Spleen (tissue), 13 donors: ENCODE measurements at regions of chr9 and their contacts with region 1.

Region 1: DNA sequence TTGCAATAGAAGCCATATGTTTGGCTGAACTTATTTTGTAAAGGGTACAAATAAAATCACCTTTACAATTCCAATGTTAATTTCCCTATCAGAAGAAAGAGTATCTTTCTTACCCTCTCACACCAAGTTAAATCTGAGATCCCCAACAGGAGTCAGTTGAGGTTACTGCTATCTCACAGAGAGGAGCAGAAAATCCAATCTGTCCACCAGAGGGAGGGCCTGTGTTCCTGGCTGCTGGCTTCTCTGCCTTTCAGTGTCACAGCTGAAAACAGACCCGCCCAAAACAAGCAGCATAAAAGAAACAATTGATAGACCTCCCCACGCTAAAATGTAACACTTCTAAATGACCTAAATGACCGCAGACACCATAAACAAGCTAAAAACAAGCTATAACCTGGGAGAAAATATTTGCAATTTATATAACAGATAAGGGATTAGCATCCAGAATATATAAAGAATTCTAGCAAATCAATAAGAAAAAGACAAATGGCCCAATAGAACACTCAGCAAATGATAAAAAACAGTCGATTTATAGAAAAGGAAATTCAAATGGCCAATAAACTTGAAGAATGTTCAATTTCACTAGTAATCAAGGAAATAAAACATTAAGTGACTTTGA is 24.5 kb upstream of the MVB12B start:
- DNase-seq: no peak
- H3K4me3 ChIP-seq: no peak overlapping the region
- H3K27ac ChIP-seq: no peak overlapping the region
- H3K4me1 ChIP-seq: peaks cover 0 to 10% (median 0%) of the 10 kb centered on the region in 6 donors
- H3K27me3 ChIP-seq: peaks cover 0 to 10% (median 0%) of the 10 kb centered on the region in 7 donors
- CTCF ChIP-seq: peak; percentile 39 to 77 (median 69)
- POLR2A ChIP-seq: no peak

Region 2: GRCh38 chr9:125538092-125538473 is 764.0 kb before region 1 on chr9:
- intact Hi-C with region 1: no loop called
- DNase-seq: no peak
- H3K4me3 ChIP-seq: no peak overlapping the region
- H3K27ac ChIP-seq: no peak overlapping the region
- H3K4me1 ChIP-seq: peaks cover 0 to 31% (median 3%) of the 10 kb centered on the region in 6 donors
- H3K27me3 ChIP-seq: no peaks in the 10 kb centered on the region
- CTCF ChIP-seq: no peak
- POLR2A ChIP-seq: no peak

Region 3: GRCh38 chr9:126228781-126229444 is 73.2 kb before region 1 on chr9:
- intact Hi-C with region 1: no loop called
- DNase-seq: peak; percentile 91
- H3K4me3 ChIP-seq: no peak overlapping the region
- H3K27ac ChIP-seq: no peak overlapping the region
- H3K4me1 ChIP-seq: peaks cover 0 to 7% (median 4%) of the 10 kb centered on the region in 6 donors
- H3K27me3 ChIP-seq: peaks cover 0 to 54% (median 0%) of the 10 kb centered on the region in 7 donors
- CTCF ChIP-seq: peak; percentile 84 to 97 (median 91)
- POLR2A ChIP-seq: no peak

Region 4: GRCh38 chr9:126490871-126491567 is 188.9 kb after region 1 on chr9:
- intact Hi-C with region 1: loop called (anchors 5 kb)
- DNase-seq: peak; percentile 61
- H3K4me3 ChIP-seq: no peak overlapping the region
- H3K27ac ChIP-seq: no peak overlapping the region
- H3K4me1 ChIP-seq: peaks cover 0 to 43% (median 32%) of the 10 kb centered on the region in 6 donors
- H3K27me3 ChIP-seq: peaks cover 0 to 7% (median 0%) of the 10 kb centered on the region in 7 donors
- CTCF ChIP-seq: peak; percentile 77 to 96 (median 92)
- POLR2A ChIP-seq: no peak